AG04449 (cell line): ENCODE measurements at regions of chrX and their contacts with region 1.

Region 1: GRCh38 chrX:31279359-31279758 is 207.5 kb upstream of the FTHL17 start:
- DNase-seq: no peak
- H3K4me3 ChIP-seq: no peak overlapping the region
- CTCF ChIP-seq: no peak

Region 2: GRCh38 chrX:31293409-31293808 is 14.1 kb after region 1 on chrX:
- CTCF ChIA-PET with region 1: no interaction called
- POLR2A ChIA-PET with region 1: no interaction called
- DNase-seq: no peak
- H3K4me3 ChIP-seq: no peak overlapping the region
- CTCF ChIP-seq: no peak

Region 3: DNA sequence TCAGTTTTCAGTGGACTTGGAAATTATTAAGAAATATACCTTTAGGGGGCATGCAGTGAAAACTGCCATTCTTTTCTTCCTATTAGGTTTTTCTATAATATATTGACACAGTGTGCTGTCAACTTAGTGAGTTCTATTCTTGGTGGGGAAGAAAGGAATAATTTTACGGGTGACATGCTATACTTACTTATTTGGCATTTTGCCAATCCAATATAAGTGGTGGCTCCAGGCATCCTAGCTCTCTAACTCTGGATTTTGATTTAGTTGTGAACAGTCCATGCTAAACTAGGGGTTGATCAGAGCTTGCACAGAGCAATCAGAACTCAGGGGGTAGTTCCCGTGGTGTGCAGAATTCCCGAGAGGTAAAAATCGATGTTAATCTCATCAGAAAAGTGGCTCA is 70.2 kb after region 1 on chrX:
- CTCF ChIA-PET with region 1: no interaction called
- POLR2A ChIA-PET with region 1: no interaction called
- DNase-seq: no peak
- H3K4me3 ChIP-seq: no peak overlapping the region
- CTCF ChIP-seq: no peak

Region 4: GRCh38 chrX:31423609-31424189 is 144.3 kb after region 1 on chrX:
- CTCF ChIA-PET with region 1: interaction called, 11 read pairs
- POLR2A ChIA-PET with region 1: no interaction called
- DNase-seq: no peak
- H3K4me3 ChIP-seq: no peak overlapping the region
- CTCF ChIP-seq: peak; percentile 20